Thyroid gland (tissue), 4 donors: ENCODE measurements at regions of chr1 and their contacts with region 1.

Region 1: DNA sequence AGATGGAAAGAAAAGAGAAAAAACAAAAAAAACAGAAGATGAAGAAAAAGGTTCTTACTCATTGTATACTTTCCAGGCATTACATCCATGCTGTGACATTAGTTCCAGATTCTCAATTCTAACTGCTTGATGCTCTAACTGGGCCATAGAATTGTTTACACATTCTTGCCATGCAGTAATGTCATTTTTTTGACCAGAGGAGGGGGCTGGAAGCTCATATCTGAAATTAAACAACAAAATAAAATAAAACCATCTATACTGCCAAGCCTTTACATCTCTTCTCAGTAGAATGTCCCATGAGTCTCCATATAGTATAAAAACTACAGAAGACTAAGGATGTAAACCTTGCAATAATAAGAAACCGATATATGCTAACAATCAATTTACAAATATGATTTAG is 5.9 kb downstream of the BCAS2 start:
- DNase-seq: no peak
- H3K4me3 ChIP-seq: no peak overlapping the region
- H3K27ac ChIP-seq: no peak overlapping the region
- H3K4me1 ChIP-seq: peaks cover 9 to 11% of the 10 kb centered on the region in 2 donors
- H3K27me3 ChIP-seq: no peaks in the 10 kb centered on the region
- CTCF ChIP-seq: no peak
- POLR2A ChIP-seq: no peak

Region 2: GRCh38 chr1:114713022-114713421 is 137.5 kb after region 1 on chr1:
- intact Hi-C with region 1: loop called (anchors 5 kb)
- DNase-seq: no peak
- H3K4me3 ChIP-seq: no peak overlapping the region
- H3K27ac ChIP-seq: no peak overlapping the region
- H3K4me1 ChIP-seq: peaks cover 13 to 17% of the 10 kb centered on the region in 2 donors
- H3K27me3 ChIP-seq: no peaks in the 10 kb centered on the region
- CTCF ChIP-seq: no peak
- POLR2A ChIP-seq: no peak